ENCODE measurements at regions of chr1 and their contacts with region 1.

Region 1: DNA sequence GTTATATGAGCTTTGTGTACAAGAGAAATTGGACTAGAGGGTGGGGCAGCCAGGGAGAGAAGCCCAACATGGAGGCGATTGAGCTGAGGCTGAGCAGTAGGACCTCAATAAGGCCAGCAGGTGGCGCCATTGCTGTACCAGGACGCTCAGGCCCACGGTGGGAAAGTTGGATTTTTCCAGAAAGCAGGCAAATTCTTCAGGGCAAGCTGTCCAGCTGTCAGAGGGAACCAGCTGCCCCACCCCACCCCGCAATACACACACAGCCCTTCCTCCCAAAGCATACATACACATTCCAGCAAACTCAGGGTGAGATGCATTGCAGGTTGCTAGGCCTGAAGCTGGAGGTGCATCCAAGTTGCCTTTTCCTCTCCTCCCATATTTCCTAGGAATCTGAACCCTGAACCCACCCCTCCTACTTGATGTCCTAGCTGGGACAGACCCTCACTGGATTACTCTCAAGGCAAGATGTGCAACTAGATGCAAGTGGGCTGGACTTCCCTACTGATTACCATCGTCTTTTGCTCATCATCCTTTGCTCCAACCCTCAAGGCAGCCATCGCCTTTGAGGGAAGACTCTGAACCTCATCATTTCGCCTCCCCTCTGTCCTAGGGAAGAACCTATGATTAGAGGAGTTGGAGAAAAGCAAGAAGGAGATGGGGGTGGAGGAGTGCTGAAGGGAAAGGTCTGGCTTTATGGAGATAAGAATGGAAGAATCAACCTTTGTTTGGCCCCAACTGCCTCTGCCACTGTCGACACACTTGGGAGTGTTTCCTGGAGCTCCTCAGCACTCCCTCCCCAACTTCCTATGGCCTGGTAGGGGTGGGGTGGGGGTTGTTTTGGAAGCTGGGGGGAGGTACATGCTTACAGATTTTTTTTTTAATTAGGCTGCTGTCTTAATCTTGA is 25.5 kb downstream of the CD34 start:
- DNase-seq: peak; percentile 81
- ATAC-seq: peak; percentile 77
- H3K4me3 Mint-ChIP-seq: no peak overlapping the region
- H3K27ac Mint-ChIP-seq: peak overlapping the region; percentile 97
- H3K4me1 Mint-ChIP-seq: peaks cover 35% of the 10 kb centered on the region
- H3K27me3 Mint-ChIP-seq: peaks cover 3% of the 10 kb centered on the region

Region 2: DNA sequence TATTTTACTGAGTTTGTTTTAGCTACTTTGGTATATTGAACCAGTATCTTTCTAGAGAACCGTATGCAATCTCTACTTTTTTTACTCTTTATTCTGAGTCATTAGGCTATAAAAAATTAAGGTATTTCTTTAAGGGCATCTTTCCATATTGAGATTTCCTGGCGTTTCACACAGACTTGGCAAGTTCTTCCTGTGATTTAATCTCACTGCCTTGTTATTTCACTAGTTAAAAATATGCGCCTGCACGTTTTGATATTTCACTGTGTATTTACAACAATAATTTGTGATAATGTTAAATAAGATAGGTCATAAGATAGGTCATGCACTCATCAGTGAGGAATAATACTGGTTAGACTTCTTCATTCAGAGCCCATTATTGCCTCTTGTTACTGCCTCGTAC is 256.6 kb before region 1 on chr1:
- CTCF ChIA-PET with region 1: no interaction called
- DNase-seq: no peak
- ATAC-seq: no peak
- H3K4me3 Mint-ChIP-seq: no peak overlapping the region
- H3K27ac Mint-ChIP-seq: no peak overlapping the region
- H3K4me1 Mint-ChIP-seq: no peaks in the 10 kb centered on the region
- H3K27me3 Mint-ChIP-seq: peaks cover 5% of the 10 kb centered on the region

Region 3: DNA sequence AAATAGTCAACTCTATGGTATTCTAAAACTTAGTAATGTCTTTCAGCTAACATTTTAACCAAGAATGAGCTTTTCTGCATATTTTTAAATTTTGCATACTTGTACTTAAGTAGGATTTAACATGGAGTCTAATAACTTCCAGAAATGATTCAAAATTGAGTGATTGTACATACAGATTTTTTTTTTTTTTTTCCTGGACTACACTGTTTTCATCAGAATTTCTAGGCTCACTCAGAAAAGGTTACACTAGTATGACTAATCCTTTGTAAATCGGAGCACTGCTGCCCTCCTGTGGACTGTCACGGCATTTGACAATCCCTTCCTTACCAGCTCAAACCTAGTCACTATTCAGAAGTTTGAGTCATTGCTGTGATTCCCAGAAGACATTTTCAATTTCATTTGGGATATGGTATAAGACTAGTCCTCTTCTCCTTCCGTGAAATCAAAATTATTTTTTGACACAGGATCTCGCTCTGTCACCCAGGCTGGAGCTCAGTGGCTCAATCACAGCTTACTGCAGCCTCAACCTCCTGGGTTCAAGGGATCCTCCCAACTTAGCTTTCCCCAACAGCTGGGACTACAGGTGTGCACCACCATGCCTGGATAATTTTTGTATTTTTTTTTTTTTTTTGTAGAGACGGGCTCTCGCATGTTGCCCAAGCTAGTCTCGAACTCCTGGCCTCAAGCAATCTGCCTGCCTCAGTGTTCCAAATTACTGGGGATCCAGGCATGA is 88.0 kb before region 1 on chr1:
- CTCF ChIA-PET with region 1: interaction called, 12 read pairs
- DNase-seq: peak; percentile 87
- ATAC-seq: peak; percentile 85
- H3K4me3 Mint-ChIP-seq: no peak overlapping the region
- H3K27ac Mint-ChIP-seq: no peak overlapping the region
- H3K4me1 Mint-ChIP-seq: peaks cover 42% of the 10 kb centered on the region
- H3K27me3 Mint-ChIP-seq: no peaks in the 10 kb centered on the region

Region 4: GRCh38 chr1:207868774-207869721 is 16.3 kb before region 1 on chr1:
- CTCF ChIA-PET with region 1: interaction called, 284 read pairs
- DNase-seq: peak; percentile 66
- ATAC-seq: peak; percentile 73
- H3K4me3 Mint-ChIP-seq: peak overlapping the region; percentile 93
- H3K27ac Mint-ChIP-seq: peak overlapping the region; percentile 90
- H3K4me1 Mint-ChIP-seq: peaks cover 80% of the 10 kb centered on the region
- H3K27me3 Mint-ChIP-seq: no peaks in the 10 kb centered on the region

Region 5: GRCh38 chr1:207903767-207904166 is 18.4 kb after region 1 on chr1:
- CTCF ChIA-PET with region 1: interaction called, 78 read pairs
- DNase-seq: no peak
- ATAC-seq: peak; percentile 42
- H3K4me3 Mint-ChIP-seq: no peak overlapping the region
- H3K27ac Mint-ChIP-seq: no peak overlapping the region
- H3K4me1 Mint-ChIP-seq: peaks cover 40% of the 10 kb centered on the region
- H3K27me3 Mint-ChIP-seq: peaks cover 10% of the 10 kb centered on the region

Region 6: GRCh38 chr1:207952617-207953542 is 67.5 kb after region 1 on chr1:
- CTCF ChIA-PET with region 1: interaction called, 235 read pairs
- DNase-seq: no peak
- ATAC-seq: no peak
- H3K4me3 Mint-ChIP-seq: no peak overlapping the region
- H3K27ac Mint-ChIP-seq: no peak overlapping the region
- H3K4me1 Mint-ChIP-seq: no peaks in the 10 kb centered on the region
- H3K27me3 Mint-ChIP-seq: peaks cover 50% of the 10 kb centered on the region